ENCODE measurements at regions of chr17 and their contacts with region 1.

Region 1: GRCh38 chr17:41695954-41696756 is 7.5 kb downstream of the EIF1 start:
- DNase-seq: peak; percentile 52 to 81 (median 74)
- ATAC-seq: peak; percentile 56
- H3K4me3 ChIP-seq: no peak overlapping the region
- H3K4me3 Mint-ChIP-seq: peak overlapping the region in 1 of 10 donors; percentile 3
- H3K27ac ChIP-seq: no peak overlapping the region
- H3K27ac Mint-ChIP-seq: peak overlapping the region; percentile 19 to 91 (median 68)
- H3K4me1 ChIP-seq: peaks cover under 1 to 8% of the 10 kb centered on the region in 2 donors
- H3K4me1 Mint-ChIP-seq: peaks cover 10 to 33% (median 25%) of the 10 kb centered on the region in 7 donors
- H3K27me3 ChIP-seq: no peaks in the 10 kb centered on the region
- H3K27me3 Mint-ChIP-seq: no peaks in the 10 kb centered on the region

Region 2: GRCh38 chr17:40854159-40854814 is 841.9 kb before region 1 on chr17:
- CTCF ChIA-PET with region 1: no interaction called
- POLR2A ChIA-PET with region 1: no interaction called
- intact Hi-C with region 1: loop called in 1 of 2 experiments (anchors 1 kb)
- DNase-seq: no peak
- ATAC-seq: no peak
- H3K4me3 ChIP-seq: no peak overlapping the region
- H3K4me3 Mint-ChIP-seq: no peak overlapping the region
- H3K27ac ChIP-seq: no peak overlapping the region
- H3K27ac Mint-ChIP-seq: no peak overlapping the region
- H3K4me1 ChIP-seq: no peaks in the 10 kb centered on the region
- H3K4me1 Mint-ChIP-seq: peaks cover 0 to 6% (median 0%) of the 10 kb centered on the region in 7 donors
- H3K27me3 ChIP-seq: no peaks in the 10 kb centered on the region
- H3K27me3 Mint-ChIP-seq: peaks cover 19 to 53% (median 27%) of the 10 kb centered on the region in 5 donors

Region 3: GRCh38 chr17:41678907-41679739 is 17.0 kb before region 1 on chr17:
- CTCF ChIA-PET with region 1: interaction called, 64 read pairs
- POLR2A ChIA-PET with region 1: interaction called, 255 read pairs
- intact Hi-C with region 1: loop called in 1 of 2 experiments (anchors 1 kb)
- DNase-seq: peak in 8 of 9 donors; percentile 49 to 72 (median 57)
- ATAC-seq: peak; percentile 93
- H3K4me3 ChIP-seq: peak overlapping the region; percentile 56
- H3K4me3 Mint-ChIP-seq: peak overlapping the region; percentile 75 to 93 (median 88)
- H3K27ac ChIP-seq: peak overlapping the region; percentile 76
- H3K27ac Mint-ChIP-seq: peak overlapping the region; percentile 94 to 98 (median 97)
- H3K4me1 ChIP-seq: peaks cover 14 to 18% of the 10 kb centered on the region in 2 donors
- H3K4me1 Mint-ChIP-seq: peaks cover 18 to 64% (median 28%) of the 10 kb centered on the region in 7 donors
- H3K27me3 ChIP-seq: no peaks in the 10 kb centered on the region
- H3K27me3 Mint-ChIP-seq: no peaks in the 10 kb centered on the region